ENCODE measurements at regions of chr17 and their contacts with region 1.

Region 1: GRCh38 chr17:12928741-12929140 is 89.1 kb downstream of the ELAC2 start:
- DNase-seq: peak in 2 of 3 donors; percentile 27 to 50
- ATAC-seq: peak; percentile 88 to 93 (median 92)
- H3K4me3 ChIP-seq: no peak overlapping the region
- H3K27ac ChIP-seq: no peak overlapping the region
- H3K4me1 ChIP-seq: no peaks in the 10 kb centered on the region
- H3K27me3 ChIP-seq: no peaks in the 10 kb centered on the region
- CTCF ChIP-seq: peak; percentile 40 to 65 (median 64)
- POLR2A ChIP-seq: no peak

Region 2: DNA sequence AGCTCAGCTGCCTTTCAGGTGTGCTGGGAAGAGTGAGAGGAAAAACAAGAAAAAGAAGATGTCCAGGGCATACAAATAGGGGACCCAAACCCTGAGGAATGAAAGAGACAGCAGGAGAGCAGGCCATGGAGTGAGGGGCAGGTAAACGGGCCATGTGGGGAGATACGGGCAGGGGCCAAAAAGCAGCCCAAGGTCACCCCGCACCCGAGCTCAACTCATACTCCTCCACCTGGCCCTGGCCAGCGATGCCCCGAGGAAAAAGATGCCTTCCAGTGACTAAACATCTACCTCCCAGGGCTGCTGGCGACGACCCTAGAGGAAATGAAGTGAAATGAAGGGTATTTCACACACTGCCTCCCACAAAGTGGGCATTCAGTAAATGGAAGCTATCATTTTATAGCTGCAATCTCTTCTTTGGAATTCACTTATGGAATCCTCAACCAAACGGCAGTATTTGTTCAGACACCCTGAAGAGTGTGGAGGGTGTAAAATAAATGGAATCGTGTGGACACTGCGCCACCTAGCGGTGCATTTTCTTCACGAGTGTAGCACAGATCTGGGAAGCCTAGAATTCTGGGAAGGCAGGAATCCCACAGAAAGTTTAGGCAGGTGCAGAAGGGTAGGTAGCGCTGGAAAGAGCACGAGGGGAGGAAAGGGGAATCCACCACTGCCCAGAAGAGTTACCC is 74.2 kb after region 1 on chr17:
- intact Hi-C with region 1: loop called (anchors 5 to 10 kb)
- DNase-seq: peak; percentile 67 to 75 (median 68)
- ATAC-seq: peak; percentile 85 to 95 (median 90)
- H3K4me3 ChIP-seq: no peak overlapping the region
- H3K27ac ChIP-seq: no peak overlapping the region
- H3K4me1 ChIP-seq: no peaks in the 10 kb centered on the region
- H3K27me3 ChIP-seq: no peaks in the 10 kb centered on the region
- CTCF ChIP-seq: peak; percentile 83 to 87 (median 85)
- POLR2A ChIP-seq: no peak

Measured in right lobe of liver (tissue), 6 donors.